ENCODE measurements at regions of chr11 and their contacts with region 1.

Region 1: DNA sequence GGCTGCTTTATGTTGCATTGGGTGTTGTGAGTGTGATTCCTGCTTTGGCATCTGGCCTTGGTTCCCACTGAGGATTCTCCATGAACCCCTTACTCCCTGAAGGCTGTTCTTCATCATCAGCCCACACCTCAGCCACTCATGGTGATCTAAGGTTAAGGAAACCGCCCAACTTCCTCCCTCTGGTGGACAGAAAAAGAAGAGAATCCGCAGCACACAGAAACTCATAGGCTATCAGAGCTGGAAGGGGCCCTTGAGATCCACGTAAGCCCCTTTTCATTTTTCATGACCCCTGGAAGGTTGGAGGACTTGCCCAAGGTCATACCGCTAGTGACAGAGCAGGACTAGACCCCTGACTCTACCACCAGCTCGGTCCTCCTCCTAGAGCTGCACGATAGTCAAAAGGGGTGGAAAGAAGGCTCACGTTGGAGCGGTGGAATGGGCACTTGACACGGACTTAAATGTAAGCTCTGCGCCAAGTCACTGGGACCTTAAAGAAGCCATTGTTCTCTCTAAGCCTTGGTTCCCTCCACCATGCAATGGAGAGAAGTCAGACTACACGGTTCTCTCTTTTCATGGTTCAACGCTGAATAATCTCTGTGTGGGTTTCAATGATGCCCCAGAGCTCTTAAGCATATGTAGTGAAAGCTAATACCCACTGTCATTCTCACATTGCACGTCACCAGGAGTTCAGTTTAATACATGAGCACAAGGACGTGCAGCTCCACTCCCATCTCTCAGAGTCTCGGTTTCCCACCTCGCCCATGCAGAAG is 83.6 kb upstream of the CRTAM start:
- DNase-seq: peak; percentile 66
- ATAC-seq: peak; percentile 35
- H3K4me3 Mint-ChIP-seq: no peak overlapping the region
- H3K27ac Mint-ChIP-seq: peak overlapping the region; percentile 79
- H3K4me1 Mint-ChIP-seq: peaks cover 89% of the 10 kb centered on the region
- H3K27me3 Mint-ChIP-seq: peaks cover 2% of the 10 kb centered on the region

Region 2: DNA sequence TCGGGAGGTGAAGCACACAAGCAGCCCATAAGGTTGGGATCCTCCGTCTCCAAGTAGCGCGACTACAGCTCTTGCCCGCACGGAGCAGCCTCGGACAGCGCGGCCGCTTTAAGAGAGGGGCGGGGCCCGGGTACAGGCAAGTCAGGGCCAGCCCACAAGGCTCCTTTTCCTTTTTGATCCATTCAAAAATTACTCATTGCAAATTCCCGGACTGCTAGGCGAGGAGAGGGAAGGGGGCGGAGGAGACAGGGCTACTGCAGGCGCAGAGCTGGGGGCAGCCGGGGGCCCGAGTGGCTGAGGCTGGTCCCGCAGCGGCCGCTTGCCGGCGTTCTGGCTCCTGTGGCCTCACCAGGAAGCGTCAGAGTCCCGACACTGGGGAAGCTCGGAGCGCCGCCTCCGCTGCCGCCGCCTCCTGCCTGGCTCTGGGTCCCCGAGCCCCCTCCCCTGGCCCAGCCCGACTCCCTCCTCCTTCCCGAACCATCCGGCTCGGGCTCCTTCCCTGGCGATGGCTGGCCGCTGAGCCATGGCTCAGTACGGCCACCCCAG is 99.1 kb before region 1 on chr11 and contains the start of gene UBASH3B:
- CTCF ChIA-PET with region 1: interaction called, 183 read pairs
- POLR2A ChIA-PET with region 1: interaction called, 31 read pairs
- DNase-seq: peak; percentile 74
- ATAC-seq: peak; percentile 81
- H3K4me3 Mint-ChIP-seq: peak within 1 kb of the TSS; percentile 98
- H3K27ac Mint-ChIP-seq: peak within 1 kb of the TSS; percentile 92
- H3K4me1 Mint-ChIP-seq: peaks cover 50% of the 10 kb centered on the region
- H3K27me3 Mint-ChIP-seq: peaks cover 13% of the 10 kb centered on the region
- total RNA-seq, gene UBASH3B: 66.6 to 75.0 TPM

Region 3: GRCh38 chr11:122697636-122698167 is 57.0 kb before region 1 on chr11:
- CTCF ChIA-PET with region 1: interaction called, 131 read pairs
- POLR2A ChIA-PET with region 1: interaction called, 9 read pairs
- DNase-seq: peak; percentile 67
- ATAC-seq: peak; percentile 74
- H3K4me3 Mint-ChIP-seq: peak overlapping the region; percentile 57
- H3K27ac Mint-ChIP-seq: peak overlapping the region; percentile 90
- H3K4me1 Mint-ChIP-seq: peaks cover 89% of the 10 kb centered on the region
- H3K27me3 Mint-ChIP-seq: no peaks in the 10 kb centered on the region

Region 4: GRCh38 chr11:122727101-122727929 is 27.4 kb before region 1 on chr11:
- CTCF ChIA-PET with region 1: interaction called, 69 read pairs
- POLR2A ChIA-PET with region 1: interaction called, 8 read pairs
- DNase-seq: peak; percentile 70
- ATAC-seq: peak; percentile 69
- H3K4me3 Mint-ChIP-seq: peak overlapping the region; percentile 68
- H3K27ac Mint-ChIP-seq: peak overlapping the region; percentile 96
- H3K4me1 Mint-ChIP-seq: peaks cover 73% of the 10 kb centered on the region
- H3K27me3 Mint-ChIP-seq: no peaks in the 10 kb centered on the region

Region 5: GRCh38 chr11:122765487-122766131 is 10.9 kb after region 1 on chr11:
- CTCF ChIA-PET with region 1: interaction called, 38 read pairs
- POLR2A ChIA-PET with region 1: interaction called, 3 read pairs
- DNase-seq: no peak
- ATAC-seq: no peak
- H3K4me3 Mint-ChIP-seq: no peak overlapping the region
- H3K27ac Mint-ChIP-seq: no peak overlapping the region
- H3K4me1 Mint-ChIP-seq: peaks cover 27% of the 10 kb centered on the region
- H3K27me3 Mint-ChIP-seq: no peaks in the 10 kb centered on the region

Region 6: DNA sequence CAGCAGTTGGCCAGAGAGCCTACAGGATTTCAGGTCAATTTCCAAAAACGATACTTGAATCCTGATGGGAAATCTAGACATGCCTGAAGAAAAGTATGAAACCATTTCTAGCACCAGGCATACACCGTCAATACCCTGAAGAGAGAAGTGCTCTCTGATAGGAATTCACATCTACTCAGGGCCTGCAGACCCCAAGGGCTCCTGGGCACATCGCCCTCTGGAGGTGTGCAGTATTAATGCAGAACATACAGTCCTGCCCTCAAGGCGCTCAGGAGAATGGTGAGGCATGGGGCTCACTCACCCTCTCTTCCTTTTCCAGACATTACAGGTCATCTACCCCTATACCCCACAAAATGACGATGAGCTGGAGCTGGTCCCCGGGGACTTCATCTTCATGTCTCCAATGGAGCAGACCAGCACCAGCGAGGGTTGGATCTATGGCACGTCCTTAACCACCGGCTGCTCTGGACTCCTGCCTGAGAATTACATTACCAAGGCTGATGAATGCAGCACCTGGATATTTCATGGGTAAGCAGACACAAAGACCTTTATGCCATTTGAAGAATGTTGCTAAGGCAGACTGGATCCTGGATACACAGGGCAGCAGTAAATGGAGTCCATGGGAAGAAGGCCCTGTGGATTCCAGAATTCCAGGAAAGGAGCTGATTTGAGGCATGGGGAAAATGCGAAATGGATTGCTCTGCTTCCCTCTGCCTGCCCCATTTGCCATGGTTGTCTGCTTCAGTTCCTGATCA is 34.2 kb after region 1 on chr11:
- CTCF ChIA-PET with region 1: interaction called, 91 read pairs
- POLR2A ChIA-PET with region 1: no interaction called
- DNase-seq: no peak
- ATAC-seq: no peak
- H3K4me3 Mint-ChIP-seq: no peak overlapping the region
- H3K27ac Mint-ChIP-seq: no peak overlapping the region
- H3K4me1 Mint-ChIP-seq: no peaks in the 10 kb centered on the region
- H3K27me3 Mint-ChIP-seq: no peaks in the 10 kb centered on the region